ENCODE measurements at regions of chr9 and their contacts with region 1.

Region 1: GRCh38 chr9:112905084-112905483 is 14.4 kb upstream of the SLC46A2 start:
- DNase-seq: no peak
- ATAC-seq: no peak
- H3K4me3 ChIP-seq: no peak overlapping the region
- H3K27ac ChIP-seq: no peak overlapping the region
- H3K4me1 ChIP-seq: no peaks in the 10 kb centered on the region
- H3K27me3 ChIP-seq: no peaks in the 10 kb centered on the region
- CTCF ChIP-seq: no peak

Region 2: DNA sequence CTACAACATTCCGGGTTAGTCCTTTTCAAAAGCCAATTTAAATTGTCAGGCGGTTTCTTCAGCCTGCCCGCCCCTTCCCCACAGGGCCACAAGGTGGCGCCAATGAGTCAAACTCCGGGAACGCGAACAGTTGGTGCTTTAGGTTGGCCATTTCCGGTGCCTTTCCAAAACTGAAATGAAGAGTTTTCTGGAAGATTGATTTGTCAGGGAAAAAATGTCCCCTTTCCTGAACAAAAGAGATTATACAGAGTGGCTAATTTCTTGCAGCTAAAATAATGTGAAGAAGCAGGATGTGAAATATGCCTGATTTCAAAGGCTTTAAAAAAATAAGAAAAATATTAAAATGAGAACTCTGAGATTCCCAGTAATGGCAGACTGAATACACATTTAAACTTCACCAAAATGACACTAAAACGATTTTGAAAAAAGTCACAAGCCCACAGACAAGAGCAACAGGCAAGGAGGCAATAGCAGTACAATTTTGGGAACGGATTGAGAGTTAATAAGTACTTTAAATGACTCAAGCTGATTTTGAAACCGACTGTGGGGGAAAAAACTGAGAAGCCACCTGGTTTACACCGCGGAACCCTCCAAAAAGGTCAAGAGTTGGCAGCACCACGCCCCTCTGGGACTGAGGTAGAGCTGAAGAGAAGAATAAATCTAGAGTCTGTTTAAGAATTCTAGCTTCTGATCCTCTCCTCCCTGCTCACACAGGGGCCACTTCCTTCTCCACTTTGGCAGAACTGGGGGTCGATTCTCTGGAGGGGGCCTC is 60.1 kb before region 1 on chr9:
- intact Hi-C with region 1: loop called in 1 of 2 experiments (anchors 10 kb)
- DNase-seq: peak; percentile 66 to 93 (median 84)
- ATAC-seq: peak; percentile 82
- H3K4me3 ChIP-seq: no peak overlapping the region
- H3K27ac ChIP-seq: peak overlapping the region; percentile 48 to 69
- H3K4me1 ChIP-seq: peaks cover 23 to 48% of the 10 kb centered on the region in 2 donors
- H3K27me3 ChIP-seq: no peaks in the 10 kb centered on the region
- CTCF ChIP-seq: peak; percentile 95 to 96

Measured in left lung (tissue), 14 donors.